ENCODE measurements at regions of chr4 and their contacts with region 1.

Region 1: GRCh38 chr4:70667740-70668535 is 1.6 kb upstream of the JCHAIN start:
- DNase-seq: no peak
- H3K4me3 ChIP-seq: no peak overlapping the region
- H3K4me3 Mint-ChIP-seq: no peak overlapping the region
- H3K27ac ChIP-seq: no peak overlapping the region
- H3K27ac Mint-ChIP-seq: no peak overlapping the region
- H3K4me1 ChIP-seq: no peaks in the 10 kb centered on the region
- H3K4me1 Mint-ChIP-seq: peaks cover 0 to 3% (median 0%) of the 10 kb centered on the region in 3 donors
- H3K27me3 ChIP-seq: no peaks in the 10 kb centered on the region
- H3K27me3 Mint-ChIP-seq: peaks cover 0 to 13% of the 10 kb centered on the region in 2 donors

Region 2: DNA sequence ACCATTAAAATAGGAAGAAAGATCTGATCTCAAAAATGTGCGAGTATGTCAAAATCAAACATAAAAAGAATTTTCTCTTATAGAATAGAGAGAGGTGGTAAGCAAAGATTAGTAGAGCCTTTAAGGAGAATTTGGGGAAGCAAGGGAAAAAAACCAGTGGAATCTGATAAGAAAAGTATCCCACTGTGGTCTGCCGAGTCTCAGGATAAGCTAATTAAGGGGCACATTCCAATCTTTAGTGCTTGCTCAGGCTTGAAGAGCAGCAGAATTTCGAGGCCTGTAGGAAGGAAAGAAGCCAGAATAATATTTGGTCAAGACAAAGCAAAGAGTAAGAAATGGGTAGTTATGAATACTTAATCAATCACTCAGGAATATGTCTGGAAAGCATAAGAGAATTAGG is 659.2 kb before region 1 on chr4:
- CTCF ChIA-PET with region 1: no interaction called
- POLR2A ChIA-PET with region 1: no interaction called
- DNase-seq: no peak
- H3K4me3 ChIP-seq: no peak overlapping the region
- H3K4me3 Mint-ChIP-seq: no peak overlapping the region
- H3K27ac ChIP-seq: no peak overlapping the region
- H3K27ac Mint-ChIP-seq: no peak overlapping the region
- H3K4me1 ChIP-seq: no peaks in the 10 kb centered on the region
- H3K4me1 Mint-ChIP-seq: no peaks in the 10 kb centered on the region
- H3K27me3 ChIP-seq: no peaks in the 10 kb centered on the region
- H3K27me3 Mint-ChIP-seq: no peaks in the 10 kb centered on the region

Region 3: GRCh38 chr4:70651864-70652506 is 16.0 kb before region 1 on chr4:
- CTCF ChIA-PET with region 1: interaction called, 10 read pairs
- POLR2A ChIA-PET with region 1: no interaction called
- DNase-seq: peak in 2 of 5 donors; percentile 24 to 37
- H3K4me3 ChIP-seq: no peak overlapping the region
- H3K4me3 Mint-ChIP-seq: no peak overlapping the region
- H3K27ac ChIP-seq: no peak overlapping the region
- H3K27ac Mint-ChIP-seq: no peak overlapping the region
- H3K4me1 ChIP-seq: no peaks in the 10 kb centered on the region
- H3K4me1 Mint-ChIP-seq: peaks cover 0 to 5% (median 0%) of the 10 kb centered on the region in 3 donors
- H3K27me3 ChIP-seq: no peaks in the 10 kb centered on the region
- H3K27me3 Mint-ChIP-seq: peaks cover 0 to 9% of the 10 kb centered on the region in 2 donors

Region 4: DNA sequence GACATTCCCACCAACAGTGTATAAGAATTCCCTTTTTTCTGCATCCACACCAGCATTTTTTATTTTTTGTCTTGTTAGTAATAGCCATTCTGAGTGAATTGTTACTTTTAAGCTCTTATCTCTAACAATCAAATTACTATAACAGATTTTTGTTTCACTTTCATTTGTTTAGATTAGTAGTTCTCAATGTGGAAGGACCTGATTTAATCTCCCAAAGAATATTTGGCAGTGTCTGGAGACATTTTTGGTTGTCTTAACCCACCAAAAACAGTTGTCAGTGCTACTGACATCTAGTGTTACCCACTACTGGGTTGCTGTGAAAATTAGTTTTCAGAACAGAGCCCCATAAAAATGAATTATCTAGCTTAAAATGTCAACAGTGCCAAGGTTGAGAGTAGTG is 91.7 kb after region 1 on chr4:
- CTCF ChIA-PET with region 1: no interaction called
- POLR2A ChIA-PET with region 1: interaction called, 10 read pairs
- DNase-seq: no peak
- H3K4me3 ChIP-seq: no peak overlapping the region
- H3K4me3 Mint-ChIP-seq: peak overlapping the region in 6 of 7 donors; percentile 40 to 68 (median 48)
- H3K27ac ChIP-seq: no peak overlapping the region
- H3K27ac Mint-ChIP-seq: peak overlapping the region in 5 of 8 donors; percentile 26 to 66 (median 48)
- H3K4me1 ChIP-seq: peaks cover 8% of the 10 kb centered on the region
- H3K4me1 Mint-ChIP-seq: peaks cover 12 to 23% (median 19%) of the 10 kb centered on the region in 3 donors
- H3K27me3 ChIP-seq: no peaks in the 10 kb centered on the region
- H3K27me3 Mint-ChIP-seq: no peaks in the 10 kb centered on the region

Region 5: GRCh38 chr4:70808151-70808550 is 140.2 kb after region 1 on chr4:
- CTCF ChIA-PET with region 1: no interaction called
- POLR2A ChIA-PET with region 1: no interaction called
- DNase-seq: no peak
- H3K4me3 ChIP-seq: no peak overlapping the region
- H3K4me3 Mint-ChIP-seq: no peak overlapping the region
- H3K27ac ChIP-seq: no peak overlapping the region
- H3K27ac Mint-ChIP-seq: no peak overlapping the region
- H3K4me1 ChIP-seq: peaks cover under 1% of the 10 kb centered on the region
- H3K4me1 Mint-ChIP-seq: peaks cover 0 to 1% (median under 1%) of the 10 kb centered on the region in 3 donors
- H3K27me3 ChIP-seq: no peaks in the 10 kb centered on the region
- H3K27me3 Mint-ChIP-seq: no peaks in the 10 kb centered on the region

Region 6: DNA sequence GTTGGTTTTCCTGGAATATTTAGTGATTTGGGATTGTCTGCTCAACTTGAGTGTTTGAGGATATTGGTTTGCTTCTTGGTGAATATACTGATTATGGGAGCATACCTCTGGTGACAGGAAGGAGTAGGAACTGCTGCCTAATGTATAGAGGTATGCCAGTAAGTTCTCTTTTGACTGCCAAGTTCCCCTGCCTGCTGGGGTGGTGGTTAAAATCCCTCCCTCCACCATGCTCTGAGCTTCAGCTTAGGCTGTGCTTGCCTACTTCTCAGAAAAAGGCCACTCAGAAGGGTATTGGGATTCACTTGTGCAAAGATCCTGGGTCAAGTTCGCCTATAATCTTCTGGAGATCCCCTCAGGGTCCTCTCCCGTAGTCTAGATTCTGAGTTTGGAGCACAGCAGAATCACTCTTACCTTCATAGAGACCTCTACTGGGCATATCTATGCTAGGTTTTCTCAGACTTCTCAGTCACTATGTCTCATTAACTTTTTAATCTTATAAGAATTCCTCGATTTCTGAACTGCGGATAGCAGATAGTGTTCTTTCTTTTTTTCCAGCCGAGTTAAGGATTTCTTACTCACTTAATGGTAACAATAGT is 280.8 kb after region 1 on chr4:
- CTCF ChIA-PET with region 1: no interaction called
- POLR2A ChIA-PET with region 1: no interaction called
- DNase-seq: no peak
- H3K4me3 ChIP-seq: no peak overlapping the region
- H3K4me3 Mint-ChIP-seq: no peak overlapping the region
- H3K27ac ChIP-seq: no peak overlapping the region
- H3K27ac Mint-ChIP-seq: peak overlapping the region in 1 of 8 donors; percentile 29
- H3K4me1 ChIP-seq: no peaks in the 10 kb centered on the region
- H3K4me1 Mint-ChIP-seq: peaks cover 12 to 15% (median 13%) of the 10 kb centered on the region in 3 donors
- H3K27me3 ChIP-seq: no peaks in the 10 kb centered on the region
- H3K27me3 Mint-ChIP-seq: no peaks in the 10 kb centered on the region